ENCODE measurements at regions of chr1 and their contacts with region 1.

Region 1: GRCh38 chr1:230797942-230798418 is 50.8 kb downstream of the CAPN9 start:
- DNase-seq: peak; percentile 46 to 82 (median 71)
- H3K4me3 ChIP-seq: no peak overlapping the region
- H3K27ac ChIP-seq: no peak overlapping the region
- H3K4me1 ChIP-seq: no peaks in the 10 kb centered on the region
- H3K27me3 ChIP-seq: no peaks in the 10 kb centered on the region
- CTCF ChIP-seq: peak; percentile 26 to 78 (median 61)
- POLR2A ChIP-seq: no peak

Region 2: GRCh38 chr1:230834292-230834691 is 36.3 kb after region 1 on chr1:
- intact Hi-C with region 1: no loop called
- DNase-seq: no peak
- H3K4me3 ChIP-seq: no peak overlapping the region
- H3K27ac ChIP-seq: no peak overlapping the region
- H3K4me1 ChIP-seq: no peaks in the 10 kb centered on the region
- H3K27me3 ChIP-seq: no peaks in the 10 kb centered on the region
- CTCF ChIP-seq: no peak
- POLR2A ChIP-seq: no peak

Region 3: DNA sequence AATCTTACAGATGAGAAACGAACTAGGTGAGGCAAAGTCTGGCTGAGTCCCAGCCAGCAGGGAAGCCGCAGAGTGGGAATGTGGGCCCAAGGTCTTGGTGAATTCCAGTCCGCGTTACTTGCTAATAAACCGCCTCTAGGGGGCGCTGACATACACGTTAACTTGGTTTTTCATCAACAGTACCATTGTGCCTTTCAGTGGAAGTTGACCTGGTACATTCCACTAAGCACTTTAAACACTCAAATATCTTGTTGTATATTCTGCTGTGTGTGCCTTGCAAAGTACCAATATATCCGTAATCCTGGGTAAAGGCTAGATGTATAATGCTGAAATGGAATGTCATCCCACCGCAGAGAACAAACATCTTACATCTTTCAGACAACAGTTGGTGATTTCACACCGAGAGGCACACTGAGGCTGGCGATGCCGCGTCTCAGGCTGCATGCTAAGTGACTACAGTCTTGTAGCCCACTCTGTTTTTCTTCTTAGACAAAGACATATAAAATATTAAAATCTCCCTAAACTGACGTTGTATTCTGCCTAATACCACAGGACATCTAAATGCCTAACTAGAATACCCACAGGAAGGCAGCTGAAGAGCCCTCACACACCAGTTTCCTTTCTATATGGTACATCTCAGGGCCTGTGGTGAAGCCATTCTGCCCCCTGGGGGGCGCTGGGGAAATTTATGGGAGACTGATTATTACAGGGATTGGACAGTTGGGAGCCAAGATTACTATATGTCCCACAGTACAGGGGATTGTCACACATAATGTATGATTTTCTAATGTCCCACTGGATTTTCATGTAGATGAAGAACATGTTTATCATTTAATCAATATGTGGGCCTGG is 119.5 kb after region 1 on chr1:
- intact Hi-C with region 1: loop called in 1 of 2 experiments (anchors 10 kb)
- DNase-seq: peak; percentile 81 to 96 (median 91)
- H3K4me3 ChIP-seq: no peak overlapping the region
- H3K27ac ChIP-seq: no peak overlapping the region
- H3K4me1 ChIP-seq: no peaks in the 10 kb centered on the region
- H3K27me3 ChIP-seq: no peaks in the 10 kb centered on the region
- CTCF ChIP-seq: peak; percentile 65 to 77 (median 74)
- POLR2A ChIP-seq: no peak

Measured in adrenal gland (tissue), 19 donors.